GM12878 (cell line): ENCODE measurements at regions of chr2 and their contacts with region 1.

Region 1: DNA sequence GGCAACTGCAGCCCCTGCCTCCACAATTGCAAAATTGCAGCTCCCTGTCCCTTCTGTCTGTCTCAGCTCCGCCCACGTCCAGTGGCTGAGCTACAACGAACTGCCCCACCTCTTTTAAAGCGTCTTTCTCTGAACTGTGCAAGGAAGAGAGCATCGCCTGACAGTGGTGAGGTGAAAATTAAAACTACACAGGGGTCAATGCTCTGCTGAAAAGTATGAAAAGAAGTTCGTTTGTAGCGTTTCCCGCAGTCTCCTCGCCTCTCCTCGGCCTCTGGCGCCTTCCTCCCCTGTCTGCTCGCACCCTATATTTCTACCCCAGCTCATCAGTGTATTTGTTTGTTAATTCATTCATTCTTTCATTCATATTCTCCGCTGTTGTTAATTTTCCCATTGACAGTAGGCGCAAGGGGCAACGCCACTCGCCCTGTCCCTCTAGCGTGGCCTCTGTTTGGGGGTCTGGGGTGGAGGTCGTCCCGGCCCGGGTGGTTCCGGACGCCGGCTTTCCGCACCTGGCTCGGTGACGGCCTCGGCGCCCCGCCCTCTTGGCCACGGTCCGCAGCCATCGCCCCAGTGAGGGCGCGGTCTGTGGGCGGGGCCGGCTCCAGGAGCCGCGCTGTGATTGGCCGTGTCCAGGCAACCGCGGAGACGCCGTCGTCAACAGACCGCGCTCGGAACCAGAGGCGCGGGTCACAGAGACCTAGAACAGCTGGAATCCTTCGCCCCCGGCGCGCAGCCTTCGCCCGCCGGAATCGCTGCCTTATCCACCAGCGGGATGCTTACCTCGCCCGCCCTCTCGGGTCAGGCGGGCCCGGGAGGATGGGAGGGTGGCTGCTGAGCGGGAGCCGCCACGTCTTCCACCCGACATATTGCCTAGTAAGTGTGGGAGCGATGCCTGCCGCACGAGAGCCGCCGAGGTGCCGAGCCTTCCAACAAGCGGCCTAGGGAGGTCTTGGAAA is at the start of gene VWA3B:
- DNase-seq: no peak
- ATAC-seq: peak; percentile 96
- H3K4me3 ChIP-seq: peak within 1 kb of the TSS; percentile 82
- H3K27ac ChIP-seq: no peak within 1 kb of the TSS
- H3K4me1 ChIP-seq: peaks cover 13% of the 10 kb centered on the region
- H3K27me3 ChIP-seq: no peaks in the 10 kb centered on the region
- CTCF ChIP-seq: no peak
- EP300 ChIP-seq: no peak
- POLR2A ChIP-seq: no peak
- RAD21 ChIP-seq: no peak
- polyA plus RNA-seq, gene VWA3B: not detected

Region 2: DNA sequence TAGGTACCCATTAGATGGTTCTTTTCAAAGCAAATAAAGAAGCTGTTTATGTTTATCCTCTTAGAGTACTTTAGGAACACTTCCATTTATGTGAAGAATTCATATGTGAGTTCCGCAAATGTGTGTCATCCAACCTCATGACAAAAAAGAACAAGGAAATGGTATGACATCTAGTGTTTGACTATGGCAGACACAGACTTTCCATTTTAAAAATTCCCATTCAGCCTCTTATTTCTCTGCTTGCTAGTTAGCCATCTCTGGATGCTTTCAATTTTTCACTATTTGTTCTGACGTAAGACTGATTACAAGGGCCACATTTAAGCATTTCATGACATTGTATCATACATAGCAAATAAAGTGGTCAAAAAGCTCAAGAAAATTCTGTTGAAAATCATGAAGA is 270.4 kb before region 1 on chr2:
- CTCF ChIA-PET with region 1: no interaction called
- POLR2A ChIA-PET with region 1: no interaction called
- RAD21 ChIA-PET with region 1: no interaction called
- SMC1A ChIA-PET with region 1: no interaction called
- in situ Hi-C with region 1: no loop called
- intact Hi-C with region 1: no loop called
- DNase-seq: no peak
- ATAC-seq: no peak
- H3K4me3 ChIP-seq: no peak overlapping the region
- H3K27ac ChIP-seq: no peak overlapping the region
- H3K4me1 ChIP-seq: no peaks in the 10 kb centered on the region
- H3K27me3 ChIP-seq: no peaks in the 10 kb centered on the region
- CTCF ChIP-seq: no peak
- EP300 ChIP-seq: no peak
- POLR2A ChIP-seq: no peak
- RAD21 ChIP-seq: no peak

Region 3: GRCh38 chr2:98012561-98012991 is 74.2 kb before region 1 on chr2:
- CTCF ChIA-PET with region 1: interaction called, 5 read pairs
- POLR2A ChIA-PET with region 1: no interaction called
- RAD21 ChIA-PET with region 1: interaction called, 3 read pairs
- SMC1A ChIA-PET with region 1: no interaction called
- in situ Hi-C with region 1: no loop called
- intact Hi-C with region 1: loop called (anchors 5 kb)
- DNase-seq: peak; percentile 88
- ATAC-seq: peak; percentile 83
- H3K4me3 ChIP-seq: peak overlapping the region; percentile 46
- H3K27ac ChIP-seq: peak overlapping the region; percentile 97
- H3K4me1 ChIP-seq: peaks cover 55% of the 10 kb centered on the region
- H3K27me3 ChIP-seq: no peaks in the 10 kb centered on the region
- CTCF ChIP-seq: no peak
- EP300 ChIP-seq: peak; percentile 85 to 99; a peak in 3 of 4 replicates
- POLR2A ChIP-seq: peak; percentile 59; the same call in 1 of the 2 replicates
- RAD21 ChIP-seq: 0 out of 2 replicates have a peak, but pooled peaks have one; percentile 24

Region 4: DNA sequence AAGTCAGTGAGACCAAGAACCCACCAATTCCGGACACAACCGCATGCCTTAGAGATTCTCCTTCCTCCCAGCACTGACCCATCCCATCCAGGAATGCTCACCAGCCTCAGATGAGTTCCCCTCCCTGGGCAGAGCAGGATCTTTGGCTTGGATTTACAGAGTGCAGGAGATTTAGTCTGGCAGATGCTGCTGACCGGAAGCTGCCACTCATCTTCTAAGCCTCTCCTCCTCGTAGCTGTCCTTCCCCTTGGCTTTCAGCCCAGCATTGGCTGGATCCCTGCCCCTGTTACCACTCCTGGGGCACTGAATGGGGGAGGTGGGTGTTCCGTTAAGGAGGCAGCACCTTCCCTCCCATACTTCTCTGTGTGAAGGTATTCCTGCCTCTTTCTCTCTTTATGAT is 53.4 kb after region 1 on chr2:
- CTCF ChIA-PET with region 1: no interaction called
- POLR2A ChIA-PET with region 1: no interaction called
- RAD21 ChIA-PET with region 1: no interaction called
- SMC1A ChIA-PET with region 1: no interaction called
- in situ Hi-C with region 1: no loop called
- intact Hi-C with region 1: no loop called
- DNase-seq: no peak
- ATAC-seq: no peak
- H3K4me3 ChIP-seq: no peak overlapping the region
- H3K27ac ChIP-seq: no peak overlapping the region
- H3K4me1 ChIP-seq: no peaks in the 10 kb centered on the region
- H3K27me3 ChIP-seq: no peaks in the 10 kb centered on the region
- CTCF ChIP-seq: no peak
- EP300 ChIP-seq: no peak
- POLR2A ChIP-seq: no peak
- RAD21 ChIP-seq: no peak